Lower leg skin (tissue), 4 donors: ENCODE measurements at regions of chr16 and their contacts with region 1.

Region 1: GRCh38 chr16:24041826-24042631 is 206.2 kb downstream of the PRKCB start:
- DNase-seq: peak in 1 of 2 donors; percentile 32
- H3K4me3 ChIP-seq: no peak overlapping the region
- CTCF ChIP-seq: no peak
- POLR2A ChIP-seq: no peak

Region 2: GRCh38 chr16:23974223-23974622 is 67.8 kb before region 1 on chr16:
- intact Hi-C with region 1: no loop called
- DNase-seq: no peak
- H3K4me3 ChIP-seq: no peak overlapping the region
- CTCF ChIP-seq: no peak
- POLR2A ChIP-seq: no peak

Region 3: DNA sequence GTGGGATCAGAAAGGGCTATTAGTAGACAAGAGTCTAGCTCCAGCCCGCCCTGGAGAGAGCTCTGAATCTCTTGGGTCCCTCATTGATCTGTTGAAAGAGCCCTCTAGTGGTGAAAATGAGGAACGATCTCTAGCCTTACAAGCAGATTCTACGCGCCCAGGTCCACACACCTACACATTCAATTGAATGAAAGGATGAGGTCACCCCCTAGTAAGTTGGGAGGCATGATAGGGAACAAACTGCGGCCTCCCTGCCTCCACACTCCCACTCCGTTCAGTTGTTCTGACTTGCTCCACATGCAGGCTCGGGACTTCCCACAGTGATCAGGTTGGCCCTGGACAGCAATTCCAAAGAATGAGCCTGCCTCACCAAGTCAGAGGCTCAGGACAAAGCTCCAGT is 211.2 kb after region 1 on chr16:
- intact Hi-C with region 1: loop called (anchors 10 kb)
- DNase-seq: no peak
- H3K4me3 ChIP-seq: no peak overlapping the region
- CTCF ChIP-seq: no peak
- POLR2A ChIP-seq: no peak

Region 4: GRCh38 chr16:24504472-24505345 is 462.7 kb after region 1 on chr16:
- intact Hi-C with region 1: loop called (anchors 10 kb)
- DNase-seq: peak; percentile 21 to 85
- H3K4me3 ChIP-seq: no peak overlapping the region
- CTCF ChIP-seq: no peak
- POLR2A ChIP-seq: no peak